ENCODE measurements at regions of chr6 and their contacts with region 1.

Region 1: GRCh38 chr6:36862164-36862847 is 12.3 kb downstream of the PPIL1 start:
- DNase-seq: no peak

Region 2: DNA sequence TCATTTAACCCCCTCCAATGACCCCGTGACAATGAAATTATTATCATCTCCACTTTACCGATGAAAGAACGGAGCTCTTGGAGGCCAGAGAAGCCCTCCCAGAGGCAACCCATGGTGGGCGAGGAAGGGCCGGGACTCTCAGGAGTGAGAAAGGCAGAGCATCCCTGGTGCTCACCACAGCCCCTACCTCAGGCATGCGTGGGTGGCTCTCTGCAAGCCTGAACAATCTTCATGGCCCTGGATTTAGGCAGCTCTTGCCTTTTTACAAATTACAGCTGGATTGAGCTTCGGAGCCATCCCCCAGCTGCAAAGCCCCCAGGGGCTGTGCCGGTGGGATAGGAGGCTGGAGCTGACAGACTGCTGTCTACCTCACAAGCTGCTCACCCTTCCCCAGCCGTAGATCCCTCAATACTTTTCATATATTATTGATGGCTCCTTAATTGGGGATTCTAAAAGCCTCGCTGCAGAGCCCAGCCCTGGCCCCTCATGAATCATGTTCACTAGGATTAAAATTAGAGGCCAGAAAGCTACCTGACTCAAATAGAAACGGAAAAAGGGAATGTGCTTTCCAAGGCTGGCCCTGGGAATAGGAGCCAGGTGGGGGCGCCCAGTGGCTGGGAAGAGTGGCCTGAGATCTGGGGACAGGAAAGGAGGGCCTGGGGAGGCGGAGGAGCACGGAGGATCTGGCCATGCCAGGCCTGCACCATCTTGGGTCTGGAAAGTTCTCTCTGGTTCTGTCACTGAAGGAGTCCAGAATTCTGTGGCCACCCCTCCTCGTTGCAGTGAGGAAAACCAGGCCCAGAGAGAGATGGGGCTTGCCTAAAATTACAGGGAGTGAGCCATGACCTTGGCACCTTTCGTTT is 52.1 kb before region 1 on chr6:
- in situ Hi-C with region 1: loop called (anchors 5 kb)
- DNase-seq: no peak

Region 3: GRCh38 chr6:36897609-36898008 is 35.3 kb after region 1 on chr6:
- in situ Hi-C with region 1: no loop called
- DNase-seq: no peak